Dorsolateral prefrontal cortex (tissue), 120 donors: ENCODE measurements at regions of chr9 and their contacts with region 1.

Region 1: GRCh38 chr9:129177791-129178559 is at the start of gene IER5L:
- DNase-seq: peak; percentile 94 to 99 (median 98)
- H3K4me3 ChIP-seq: peak within 1 kb of the TSS; percentile 61 to 94 (median 84)
- H3K27ac ChIP-seq: peak within 1 kb of the TSS; percentile 62 to 100 (median 97)
- H3K27me3 ChIP-seq: no peaks in the 10 kb centered on the region
- CTCF ChIP-seq: peak in 29 of 56 donors; percentile 5 to 48 (median 25)
- total RNA-seq, gene IER5L: 4.7 to 34.0 (median 13.8) TPM

Region 2: GRCh38 chr9:129139993-129140396 is 38.0 kb before region 1 on chr9:
- intact Hi-C with region 1: loop called (anchors 1 to 2 kb)
- DNase-seq: peak; percentile 59 to 95 (median 86)
- H3K4me3 ChIP-seq: peak overlapping the region; percentile 13 to 66 (median 47)
- H3K27ac ChIP-seq: peak overlapping the region; percentile 98 to 100 (median 100)
- H3K27me3 ChIP-seq: no peaks in the 10 kb centered on the region
- CTCF ChIP-seq: peak in 16 of 56 donors; percentile 6 to 38 (median 17)

Region 3: GRCh38 chr9:129258124-129258822 is 80.3 kb after region 1 on chr9:
- intact Hi-C with region 1: loop called in 1 of 2 experiments (anchors 5 kb)
- DNase-seq: peak; percentile 85 to 97 (median 94)
- H3K4me3 ChIP-seq: peak overlapping the region; percentile 18 to 66 (median 52)
- H3K27ac ChIP-seq: peak overlapping the region in 50 of 59 donors; percentile 2 to 86 (median 64)
- H3K27me3 ChIP-seq: no peaks in the 10 kb centered on the region
- CTCF ChIP-seq: no peak

Region 4: DNA sequence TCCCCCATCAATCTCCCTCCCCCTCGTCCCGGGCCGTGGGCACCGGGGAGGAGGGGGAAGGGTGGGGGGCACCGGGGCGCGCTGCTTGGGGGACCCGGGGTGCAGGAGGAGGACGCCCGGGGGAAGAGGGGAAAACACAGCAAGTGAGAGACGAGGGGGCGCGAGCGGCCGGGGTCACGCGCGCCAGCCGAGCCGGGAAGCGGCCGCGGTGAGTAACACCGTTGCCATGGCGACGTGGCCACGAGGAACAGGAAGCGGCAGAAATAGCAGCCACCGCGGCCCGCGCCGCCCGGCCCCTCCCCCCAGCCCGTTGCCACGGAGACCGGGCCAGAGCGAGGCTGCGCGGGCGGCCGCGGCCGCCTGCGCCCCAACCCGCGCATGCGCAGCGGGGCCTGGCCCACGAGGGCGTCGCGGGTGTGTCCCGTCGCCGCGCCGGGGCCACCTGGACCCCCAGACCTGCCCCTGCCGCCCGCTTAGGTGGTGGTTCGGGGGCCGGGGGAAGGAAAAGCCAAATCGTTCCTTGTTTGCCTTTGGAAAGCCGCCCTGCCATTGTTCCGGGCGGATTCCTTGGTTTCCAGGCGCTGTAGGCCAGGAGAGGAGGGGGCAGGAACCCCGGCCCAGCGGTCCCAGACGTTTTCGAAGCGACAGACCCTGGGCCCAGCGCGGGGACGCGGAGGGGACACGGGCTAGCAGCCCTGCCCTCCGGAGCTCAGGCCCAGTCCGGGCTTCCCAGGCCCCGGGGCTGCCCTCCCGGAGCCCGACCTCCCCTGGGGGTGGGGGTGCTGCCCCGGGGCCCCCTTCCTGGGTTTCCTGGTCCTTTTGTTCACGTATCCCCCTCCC is 235.8 kb after region 1 on chr9:
- intact Hi-C with region 1: loop called (anchors 2 to 5 kb)
- DNase-seq: peak; percentile 97 to 99 (median 98)
- H3K4me3 ChIP-seq: peak overlapping the region; percentile 47 to 89 (median 71)
- H3K27ac ChIP-seq: peak overlapping the region; percentile 91 to 100 (median 99)
- H3K27me3 ChIP-seq: no peaks in the 10 kb centered on the region
- CTCF ChIP-seq: peak in 13 of 56 donors; percentile 8 to 50 (median 21)

Region 5: GRCh38 chr9:129487642-129488409 is 309.9 kb after region 1 on chr9:
- intact Hi-C with region 1: loop called (anchors 5 kb)
- DNase-seq: peak in 5 of 10 donors; percentile 40 to 65 (median 58)
- H3K4me3 ChIP-seq: peak overlapping the region; percentile 34 to 74 (median 60)
- H3K27ac ChIP-seq: peak overlapping the region; percentile 81 to 100 (median 99)
- H3K27me3 ChIP-seq: no peaks in the 10 kb centered on the region
- CTCF ChIP-seq: no peak